Activated CD8-positive, alpha-beta memory T cell treated with anti-CD3 and anti-CD28 coated beads, Interleukin-2, amount 10 ng/mL, durations not matched to agents 7 days and 5 days (primary cell): ENCODE measurements at regions of chr6 and their contacts with region 1.

Region 1: GRCh38 chr6:154928325-154928922 is 66.7 kb upstream of the TIAM2 start:
- DNase-seq: peak; percentile 74
- ATAC-seq: peak; percentile 76
- H3K4me3 Mint-ChIP-seq: no peak overlapping the region
- H3K27ac Mint-ChIP-seq: no peak overlapping the region
- H3K4me1 Mint-ChIP-seq: peaks cover 5% of the 10 kb centered on the region
- H3K27me3 Mint-ChIP-seq: no peaks in the 10 kb centered on the region

Region 2: GRCh38 chr6:154909821-154910220 is 18.6 kb before region 1 on chr6:
- CTCF ChIA-PET with region 1: no interaction called
- DNase-seq: no peak
- ATAC-seq: no peak
- H3K4me3 Mint-ChIP-seq: no peak overlapping the region
- H3K27ac Mint-ChIP-seq: no peak overlapping the region
- H3K4me1 Mint-ChIP-seq: peaks cover 4% of the 10 kb centered on the region
- H3K27me3 Mint-ChIP-seq: no peaks in the 10 kb centered on the region

Region 3: DNA sequence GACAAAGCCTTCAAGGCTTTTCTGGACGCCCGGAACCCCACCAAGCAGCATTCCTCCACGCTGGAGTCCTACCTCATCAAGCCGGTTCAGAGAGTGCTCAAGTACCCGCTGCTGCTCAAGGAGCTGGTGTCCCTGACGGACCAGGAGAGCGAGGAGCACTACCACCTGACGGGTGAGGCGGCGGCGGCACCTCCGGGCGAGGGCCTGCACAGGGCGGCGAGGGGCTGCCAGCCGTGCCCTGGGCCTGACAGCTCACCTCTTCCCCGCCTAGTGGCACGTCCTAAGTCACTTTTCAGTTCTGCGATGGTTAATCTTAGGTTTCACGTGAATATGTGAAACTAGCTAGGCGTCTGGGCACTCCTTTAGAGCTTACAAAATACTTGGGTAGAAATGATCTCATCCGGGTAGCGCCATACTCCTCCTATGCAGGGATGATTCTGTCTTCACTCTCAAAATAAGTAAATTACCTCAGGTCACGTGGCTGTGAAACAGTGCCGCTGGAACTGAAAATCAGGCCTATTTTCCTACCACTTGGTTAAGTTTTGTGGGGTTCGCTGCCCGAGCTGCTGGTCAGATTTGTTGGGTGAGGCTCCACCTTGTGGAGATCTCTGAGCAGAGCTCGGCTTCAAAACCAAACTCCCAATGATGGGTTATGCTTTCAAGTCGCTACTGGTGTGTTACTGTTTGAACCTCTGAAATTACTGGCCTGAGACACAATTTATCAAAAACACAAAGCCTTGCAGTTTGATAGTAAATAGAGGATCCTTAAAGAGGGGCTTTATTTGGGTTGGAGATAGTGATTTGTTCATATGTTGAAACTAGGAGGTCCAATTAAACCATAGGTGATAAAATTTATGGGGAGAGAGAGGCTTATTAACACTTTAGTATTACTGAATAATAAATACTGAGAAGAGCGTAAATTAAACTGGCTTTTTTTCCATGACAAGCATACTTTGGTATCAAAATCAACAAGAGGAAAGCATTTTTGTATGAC is 319.9 kb after region 1 on chr6:
- CTCF ChIA-PET with region 1: interaction called, 11 read pairs
- DNase-seq: no peak
- ATAC-seq: no peak
- H3K4me3 Mint-ChIP-seq: no peak overlapping the region
- H3K27ac Mint-ChIP-seq: no peak overlapping the region
- H3K4me1 Mint-ChIP-seq: no peaks in the 10 kb centered on the region
- H3K27me3 Mint-ChIP-seq: no peaks in the 10 kb centered on the region